BJ (cell line): ENCODE measurements at regions of chr5 and their contacts with region 1.

Region 1: DNA sequence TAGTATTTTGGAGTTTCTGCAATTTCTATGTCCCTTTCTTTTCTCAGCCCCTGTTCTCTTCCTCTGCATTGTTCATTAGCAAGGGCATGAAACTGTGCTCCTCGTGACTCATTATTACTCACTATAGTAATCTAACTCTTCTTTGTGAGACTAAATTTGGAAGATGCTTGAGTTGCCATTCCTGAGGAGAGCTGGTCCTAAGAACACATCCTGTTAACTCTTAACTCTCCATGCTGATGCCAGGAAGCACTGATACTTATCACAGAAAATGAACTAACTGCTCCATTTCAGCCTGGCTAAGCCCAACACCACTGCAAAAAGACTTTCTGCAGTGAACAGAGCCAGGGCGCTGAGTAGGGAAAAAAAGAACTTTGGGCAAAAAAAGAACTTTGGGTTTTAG is 10.6 kb upstream of the CSNK1A1 start:
- DNase-seq: peak; percentile 80
- H3K4me3 ChIP-seq: no peak overlapping the region
- H3K27me3 ChIP-seq: no peaks in the 10 kb centered on the region
- CTCF ChIP-seq: no peak

Region 2: DNA sequence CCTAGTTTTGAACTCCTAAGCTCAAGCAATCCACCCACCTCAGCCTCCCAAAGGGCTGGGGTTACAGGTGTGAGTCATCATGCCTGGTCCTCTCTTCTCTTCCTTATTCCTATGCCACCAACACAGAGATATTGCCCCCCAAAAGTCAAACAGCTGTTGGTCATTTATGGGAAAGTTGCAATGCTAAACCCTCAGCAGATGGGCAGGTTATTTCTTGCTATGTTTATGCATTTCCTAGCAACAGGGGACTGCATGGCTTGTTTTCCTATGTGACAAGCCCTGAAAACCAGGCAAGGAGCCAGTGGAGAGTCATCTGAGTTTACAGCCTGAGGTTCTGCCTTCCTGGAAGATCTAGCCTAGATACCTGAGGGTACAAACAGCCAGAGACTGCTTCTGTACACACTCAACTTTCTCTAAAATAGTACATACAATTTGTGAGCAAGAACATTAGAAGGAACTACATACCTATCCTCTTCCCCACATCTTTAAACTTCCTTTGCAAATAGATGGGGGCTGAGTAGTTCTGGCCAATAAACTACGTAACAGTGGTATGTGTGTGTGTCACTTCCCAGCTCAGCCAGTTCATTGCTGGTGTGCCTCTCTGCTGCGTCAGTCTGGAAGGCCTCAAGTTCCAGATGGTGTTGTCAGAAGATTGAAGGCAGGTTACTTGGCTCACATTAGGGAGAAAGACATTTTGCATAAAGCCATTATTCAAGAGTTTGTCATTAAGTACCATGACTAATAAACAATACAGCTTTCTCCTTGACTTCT is 76.0 kb before region 1 on chr5:
- CTCF ChIA-PET with region 1: interaction called, 12 read pairs
- POLR2A ChIA-PET with region 1: no interaction called
- DNase-seq: peak; percentile 100
- H3K4me3 ChIP-seq: no peak overlapping the region
- H3K27me3 ChIP-seq: no peaks in the 10 kb centered on the region
- CTCF ChIP-seq: no peak

Region 3: GRCh38 chr5:149551200-149552037 is 10.4 kb before region 1 on chr5 and contains the start of gene CSNK1A1:
- CTCF ChIA-PET with region 1: interaction called, 24 read pairs
- POLR2A ChIA-PET with region 1: interaction called, 3 read pairs
- DNase-seq: peak; percentile 90
- H3K4me3 ChIP-seq: peak within 1 kb of the TSS; percentile 75
- H3K27me3 ChIP-seq: no peaks in the 10 kb centered on the region
- CTCF ChIP-seq: peak; percentile 80
- polyA plus RNA-seq, gene CSNK1A1: 171 and 268 TPM in 2 replicates

Region 4: GRCh38 chr5:149581192-149581861 is 19.5 kb after region 1 on chr5 and contains the start of gene ARHGEF37:
- CTCF ChIA-PET with region 1: interaction called, 11 read pairs
- POLR2A ChIA-PET with region 1: no interaction called
- DNase-seq: no peak
- H3K4me3 ChIP-seq: peak within 1 kb of the TSS; percentile 39
- H3K27me3 ChIP-seq: no peaks in the 10 kb centered on the region
- CTCF ChIP-seq: no peak
- polyA plus RNA-seq, gene ARHGEF37: 0.42 and 0.92 TPM in 2 replicates